ENCODE measurements at regions of chr13 and their contacts with region 1.

Region 1: DNA sequence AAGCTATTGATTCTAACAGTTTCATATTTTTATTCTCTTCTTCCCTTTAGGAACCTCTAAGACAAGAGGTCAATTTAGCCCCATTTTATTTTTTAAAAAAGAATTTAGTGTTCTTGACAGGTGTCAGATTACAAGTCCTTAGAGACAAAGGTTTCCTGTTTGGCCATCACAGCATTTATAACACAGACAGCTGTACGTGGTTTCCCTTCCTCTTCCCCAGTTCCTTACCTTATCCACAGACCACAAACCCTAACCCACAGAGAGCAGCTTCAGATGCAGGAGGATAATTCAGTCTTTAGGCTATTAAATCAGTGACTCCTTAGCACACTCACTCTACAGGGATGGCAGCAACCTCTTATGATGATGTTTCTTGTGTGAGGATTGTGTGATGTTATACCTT is 1210.1 kb downstream of the DIAPH3 start:
- DNase-seq: peak; percentile 92
- H3K4me3 ChIP-seq: peak overlapping the region; percentile 47
- H3K27ac ChIP-seq: peak overlapping the region; percentile 88
- H3K4me1 ChIP-seq: peaks cover 60% of the 10 kb centered on the region
- CTCF ChIP-seq: no peak

Region 2: DNA sequence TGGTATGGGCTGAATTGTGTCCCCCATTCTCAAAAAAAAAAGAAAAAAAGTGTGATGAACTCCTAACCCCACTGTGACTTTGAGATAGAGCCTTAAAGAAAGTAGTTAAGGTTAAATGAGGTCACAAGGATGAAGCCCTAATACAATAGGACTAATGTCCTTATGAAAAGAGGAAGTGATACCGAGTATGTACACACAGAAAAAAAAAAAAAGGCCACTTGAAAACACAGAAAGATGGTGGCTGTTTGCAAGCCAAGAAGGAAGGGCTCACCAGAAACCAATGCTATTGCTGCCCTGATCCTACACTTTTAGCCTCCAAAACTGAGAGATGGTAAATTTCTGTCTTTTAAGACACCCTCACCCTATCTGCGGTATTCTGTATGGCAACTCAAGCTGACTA is 366.5 kb before region 1 on chr13:
- CTCF ChIA-PET with region 1: no interaction called
- POLR2A ChIA-PET with region 1: no interaction called
- intact Hi-C with region 1: loop called (anchors 10 kb)
- DNase-seq: peak; percentile 59
- H3K4me3 ChIP-seq: no peak overlapping the region
- H3K27ac ChIP-seq: no peak overlapping the region
- H3K4me1 ChIP-seq: peaks cover 18% of the 10 kb centered on the region
- CTCF ChIP-seq: no peak

Region 3: DNA sequence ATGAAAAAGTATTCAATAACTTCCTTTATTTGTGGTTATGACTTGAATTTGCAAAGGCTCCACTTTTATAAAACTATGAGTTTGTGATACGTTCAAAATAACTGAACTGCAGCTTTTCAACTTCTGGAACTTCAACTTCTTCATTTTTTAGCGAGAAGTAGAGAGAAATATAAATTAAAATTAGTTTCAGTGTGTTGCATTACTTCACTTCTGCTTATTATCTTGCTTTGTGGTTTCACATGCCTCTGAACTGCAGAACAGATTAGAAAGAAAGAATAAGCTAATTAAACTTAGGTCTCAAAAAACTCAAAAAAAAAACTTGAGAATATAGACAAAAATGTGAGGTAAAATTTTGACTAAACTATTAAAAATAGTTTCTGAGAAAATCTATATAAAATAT is 248.7 kb before region 1 on chr13:
- CTCF ChIA-PET with region 1: no interaction called
- POLR2A ChIA-PET with region 1: no interaction called
- intact Hi-C with region 1: loop called (anchors 10 kb)
- DNase-seq: no peak
- H3K4me3 ChIP-seq: no peak overlapping the region
- H3K27ac ChIP-seq: no peak overlapping the region
- H3K4me1 ChIP-seq: no peaks in the 10 kb centered on the region
- CTCF ChIP-seq: no peak

Region 4: GRCh38 chr13:59809564-59809963 is 855.9 kb after region 1 on chr13:
- CTCF ChIA-PET with region 1: no interaction called
- POLR2A ChIA-PET with region 1: no interaction called
- intact Hi-C with region 1: no loop called
- DNase-seq: no peak
- H3K4me3 ChIP-seq: no peak overlapping the region
- H3K27ac ChIP-seq: no peak overlapping the region
- H3K4me1 ChIP-seq: no peaks in the 10 kb centered on the region
- CTCF ChIP-seq: no peak